Activated CD8-positive, alpha-beta T cell treated with anti-CD3 and anti-CD28 coated beads for 36 hours (primary cell): ENCODE measurements at regions of chrX and their contacts with region 1.

Region 1: GRCh38 chrX:119266364-119266995 is 30.4 kb downstream of the PGRMC1 start:
- DNase-seq: peak; percentile 32
- ATAC-seq: no peak
- H3K4me3 Mint-ChIP-seq: no peak overlapping the region
- H3K27ac Mint-ChIP-seq: no peak overlapping the region
- H3K4me1 Mint-ChIP-seq: no peaks in the 10 kb centered on the region
- H3K27me3 Mint-ChIP-seq: peaks cover 1% of the 10 kb centered on the region
- CTCF ChIP-seq: peak; percentile 64

Region 2: DNA sequence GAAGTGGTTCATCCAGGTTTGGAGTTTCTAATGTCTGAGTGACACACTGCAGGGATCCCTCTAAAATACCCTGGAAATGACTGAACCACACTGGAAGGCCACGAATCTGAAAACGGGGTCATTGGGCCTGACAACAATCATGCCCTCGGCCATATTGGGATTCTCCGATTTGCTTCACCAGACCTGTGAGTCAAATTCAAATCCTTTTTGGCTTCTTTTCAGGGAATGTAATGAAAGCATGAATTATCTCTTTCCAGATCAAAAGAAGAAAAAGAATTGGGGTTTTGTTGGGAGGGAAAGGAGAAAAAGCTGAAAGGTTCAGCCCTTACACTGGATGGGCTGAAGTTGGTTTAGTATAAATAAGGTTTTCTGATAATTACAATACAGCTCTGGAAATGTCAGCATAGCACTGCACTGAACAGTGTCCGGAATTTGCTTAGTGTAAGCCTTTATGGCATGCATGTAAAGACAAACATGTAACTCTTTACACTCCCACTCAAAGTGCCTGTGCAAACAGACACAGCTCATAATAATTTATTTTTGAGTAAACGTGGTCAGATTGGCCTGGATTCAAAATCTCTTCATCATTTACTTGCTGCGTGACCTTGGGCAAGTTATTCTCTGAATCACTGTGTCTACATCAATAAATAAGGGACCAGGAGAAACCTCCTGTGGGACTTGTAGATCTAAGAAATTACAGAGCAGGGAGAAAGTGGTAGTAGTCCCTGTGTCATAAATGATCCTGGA is 172.3 kb before region 1 on chrX:
- CTCF ChIA-PET with region 1: no interaction called
- POLR2A ChIA-PET with region 1: no interaction called
- intact Hi-C with region 1: no loop called
- DNase-seq: no peak
- ATAC-seq: no peak
- H3K4me3 Mint-ChIP-seq: no peak overlapping the region
- H3K27ac Mint-ChIP-seq: no peak overlapping the region
- H3K4me1 Mint-ChIP-seq: no peaks in the 10 kb centered on the region
- H3K27me3 Mint-ChIP-seq: peaks cover 2% of the 10 kb centered on the region
- CTCF ChIP-seq: no peak

Region 3: DNA sequence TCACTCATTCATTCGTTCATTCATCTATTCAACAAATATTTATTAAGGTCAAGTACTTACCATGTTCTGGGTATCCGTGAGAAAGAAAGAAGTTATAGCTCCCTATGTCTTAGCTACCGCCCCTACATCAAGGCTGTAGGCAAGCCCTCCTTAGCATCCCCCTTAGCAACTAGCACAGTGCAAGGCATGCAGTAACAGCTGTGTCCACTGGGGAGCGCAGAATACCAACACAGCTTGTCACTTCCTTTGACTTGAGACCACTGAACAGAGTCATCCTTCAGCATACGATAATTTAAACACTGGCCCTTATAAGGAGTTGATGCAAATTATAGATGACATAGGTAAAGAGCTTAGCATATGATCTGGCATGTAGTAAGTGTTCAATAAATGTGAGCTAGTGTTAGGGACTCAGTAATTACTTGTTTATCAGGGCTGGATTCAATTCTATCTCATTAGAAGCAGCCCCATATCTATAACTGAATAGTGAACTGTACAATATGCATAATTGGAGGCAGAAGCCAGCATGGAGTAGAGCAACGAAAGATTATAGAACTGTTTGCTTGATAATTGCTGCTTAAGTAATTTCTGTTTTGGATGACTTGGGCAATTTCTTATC is 147.6 kb before region 1 on chrX:
- CTCF ChIA-PET with region 1: interaction called, 14 read pairs
- POLR2A ChIA-PET with region 1: no interaction called
- intact Hi-C with region 1: loop called (anchors 2 kb)
- DNase-seq: peak; percentile 76
- ATAC-seq: peak; percentile 89
- H3K4me3 Mint-ChIP-seq: no peak overlapping the region
- H3K27ac Mint-ChIP-seq: no peak overlapping the region
- H3K4me1 Mint-ChIP-seq: no peaks in the 10 kb centered on the region
- H3K27me3 Mint-ChIP-seq: peaks cover 7% of the 10 kb centered on the region
- CTCF ChIP-seq: peak; percentile 62

Region 4: GRCh38 chrX:119145241-119145653 is 121.2 kb before region 1 on chrX:
- CTCF ChIA-PET with region 1: no interaction called
- POLR2A ChIA-PET with region 1: no interaction called
- intact Hi-C with region 1: loop called (anchors 10 kb)
- DNase-seq: peak; percentile 9
- ATAC-seq: no peak
- H3K4me3 Mint-ChIP-seq: no peak overlapping the region
- H3K27ac Mint-ChIP-seq: no peak overlapping the region
- H3K4me1 Mint-ChIP-seq: no peaks in the 10 kb centered on the region
- H3K27me3 Mint-ChIP-seq: no peaks in the 10 kb centered on the region
- CTCF ChIP-seq: no peak

Region 5: DNA sequence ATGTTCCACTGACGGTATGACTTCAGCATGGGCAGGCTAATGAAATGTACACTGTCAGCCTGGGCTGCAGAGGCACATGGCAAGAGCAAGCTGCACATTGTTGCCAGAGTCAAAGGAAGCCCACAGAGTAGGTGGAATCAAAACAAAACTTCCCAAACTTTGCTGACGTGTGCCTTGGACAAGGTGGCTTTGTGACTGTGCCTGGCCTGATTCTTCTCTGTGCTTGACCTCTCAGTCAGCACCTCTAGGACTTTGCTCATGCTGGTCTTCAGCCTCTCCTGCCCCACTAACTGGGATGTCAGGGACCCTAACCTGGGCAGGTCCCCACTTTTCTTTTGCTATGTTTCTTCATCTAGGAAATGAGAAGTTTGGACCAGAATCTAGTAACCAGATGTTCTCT is 98.4 kb before region 1 on chrX:
- CTCF ChIA-PET with region 1: no interaction called
- POLR2A ChIA-PET with region 1: no interaction called
- intact Hi-C with region 1: no loop called
- DNase-seq: no peak
- ATAC-seq: no peak
- H3K4me3 Mint-ChIP-seq: no peak overlapping the region
- H3K27ac Mint-ChIP-seq: no peak overlapping the region
- H3K4me1 Mint-ChIP-seq: no peaks in the 10 kb centered on the region
- H3K27me3 Mint-ChIP-seq: peaks cover 6% of the 10 kb centered on the region
- CTCF ChIP-seq: no peak

Region 6: DNA sequence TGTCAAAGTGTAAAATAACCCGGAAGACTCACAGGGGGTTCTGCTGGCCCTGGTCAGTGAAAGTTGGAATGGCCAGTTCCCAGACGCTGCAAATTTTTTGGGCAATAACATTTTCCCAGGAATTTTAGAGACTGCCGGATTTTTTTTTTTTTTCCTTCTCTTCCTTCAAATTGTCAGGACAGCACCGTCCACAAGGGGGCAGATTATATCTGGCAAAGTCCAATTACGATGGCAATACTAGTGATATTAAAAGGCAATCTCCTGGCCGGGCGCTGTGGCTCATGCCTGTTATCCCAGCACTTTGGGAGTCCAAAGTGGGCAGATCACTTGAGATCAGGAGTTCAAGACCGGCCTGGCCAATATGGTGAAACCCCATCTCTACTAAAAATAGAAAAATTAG is 222.3 kb after region 1 on chrX:
- CTCF ChIA-PET with region 1: no interaction called
- POLR2A ChIA-PET with region 1: no interaction called
- intact Hi-C with region 1: no loop called
- DNase-seq: peak; percentile 52
- ATAC-seq: no peak
- H3K4me3 Mint-ChIP-seq: no peak overlapping the region
- H3K27ac Mint-ChIP-seq: no peak overlapping the region
- H3K4me1 Mint-ChIP-seq: no peaks in the 10 kb centered on the region
- H3K27me3 Mint-ChIP-seq: no peaks in the 10 kb centered on the region
- CTCF ChIP-seq: peak; percentile 63